PC-9 (cell line): ENCODE measurements at regions of chr12 and their contacts with region 1.

Region 1: DNA sequence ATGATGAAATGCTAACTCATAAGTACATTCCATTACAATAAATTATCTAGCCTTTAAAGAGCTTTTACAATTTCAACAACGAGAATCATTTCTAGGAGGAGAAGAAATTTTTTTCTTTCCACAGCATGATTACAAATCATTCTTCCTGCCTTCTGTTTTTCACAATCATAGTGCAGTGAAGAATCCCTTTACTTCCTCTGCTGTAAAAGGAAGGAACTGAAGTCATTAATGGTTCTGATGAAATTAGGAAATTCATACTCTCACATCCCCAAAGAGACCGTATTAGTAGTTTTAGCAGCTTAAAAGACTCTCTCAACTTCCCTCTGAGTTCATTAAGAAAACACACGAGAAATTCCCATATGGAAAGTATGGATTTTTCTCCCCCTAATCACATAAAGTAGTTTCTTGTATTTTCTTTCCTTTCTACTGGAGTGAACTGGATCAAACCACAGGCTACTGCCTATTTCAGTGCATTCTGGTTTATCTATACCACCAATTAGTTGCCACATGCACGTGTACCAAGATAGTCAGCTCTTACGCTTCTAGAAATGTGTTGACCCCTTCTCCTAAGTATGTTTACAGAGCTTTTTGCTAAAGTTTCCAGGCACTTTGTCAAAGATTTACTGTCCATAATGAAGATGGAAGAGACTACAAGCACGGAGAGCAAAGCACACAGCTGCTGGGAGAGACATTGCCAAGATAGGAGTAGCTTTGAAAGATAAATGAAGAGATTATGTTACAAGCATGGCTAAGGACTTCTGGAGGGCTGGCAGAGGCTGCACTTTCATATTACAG is 58.9 kb upstream of the KITLG start:
- DNase-seq: no peak
- H3K4me3 ChIP-seq: no peak overlapping the region
- H3K27ac ChIP-seq: no peak overlapping the region
- H3K4me1 ChIP-seq: no peaks in the 10 kb centered on the region
- H3K27me3 ChIP-seq: no peaks in the 10 kb centered on the region
- CTCF ChIP-seq: no peak

Region 2: GRCh38 chr12:88562846-88563582 is 76.1 kb before region 1 on chr12:
- CTCF ChIA-PET with region 1: no interaction called
- POLR2A ChIA-PET with region 1: no interaction called
- intact Hi-C with region 1: no loop called
- DNase-seq: no peak
- H3K4me3 ChIP-seq: no peak overlapping the region
- H3K27ac ChIP-seq: no peak overlapping the region
- H3K4me1 ChIP-seq: no peaks in the 10 kb centered on the region
- H3K27me3 ChIP-seq: no peaks in the 10 kb centered on the region
- CTCF ChIP-seq: no peak

Region 3: GRCh38 chr12:88625356-88625755 is 13.8 kb before region 1 on chr12:
- CTCF ChIA-PET with region 1: no interaction called
- POLR2A ChIA-PET with region 1: interaction called, 11 read pairs
- intact Hi-C with region 1: no loop called
- DNase-seq: no peak
- H3K4me3 ChIP-seq: no peak overlapping the region
- H3K27ac ChIP-seq: no peak overlapping the region
- H3K4me1 ChIP-seq: no peaks in the 10 kb centered on the region
- H3K27me3 ChIP-seq: no peaks in the 10 kb centered on the region
- CTCF ChIP-seq: no peak